Adrenal gland (tissue), 19 donors: ENCODE measurements at regions of chr14 and their contacts with region 1.

Region 1: GRCh38 chr14:22986508-22987054 is 4.2 kb upstream of the AJUBA start:
- DNase-seq: peak; percentile 84 to 98 (median 93)
- H3K4me3 ChIP-seq: no peak overlapping the region
- H3K27ac ChIP-seq: no peak overlapping the region
- H3K4me1 ChIP-seq: peaks cover 6 to 15% of the 10 kb centered on the region in 2 donors
- H3K27me3 ChIP-seq: no peaks in the 10 kb centered on the region
- CTCF ChIP-seq: peak; percentile 84 to 96 (median 93)
- POLR2A ChIP-seq: no peak

Region 2: DNA sequence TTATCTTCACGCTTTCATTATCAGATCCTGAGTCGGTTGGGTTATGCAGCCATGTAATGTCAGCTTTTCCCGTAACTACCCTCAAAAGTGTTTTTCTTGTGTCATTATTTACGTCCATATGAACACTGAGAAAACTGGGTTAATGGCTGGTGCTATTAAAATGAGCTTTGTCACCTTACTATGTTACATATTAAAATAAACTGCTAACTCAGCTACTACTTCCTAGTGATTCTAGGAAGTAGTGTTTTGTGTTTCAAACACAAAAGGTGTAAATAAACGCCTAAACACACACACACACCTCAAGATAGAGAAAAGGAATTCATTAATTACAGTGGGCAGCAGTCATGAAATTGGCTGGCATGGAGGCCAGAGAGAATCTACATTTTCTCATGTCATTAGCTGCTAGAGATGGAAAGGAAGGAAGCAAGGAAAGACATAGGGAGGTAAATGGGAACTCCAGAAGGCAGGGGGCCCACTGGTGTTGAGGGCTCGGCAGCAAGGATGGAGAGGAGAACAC is 56.7 kb before region 1 on chr14:
- intact Hi-C with region 1: loop called in 1 of 2 experiments (anchors 10 kb)
- DNase-seq: no peak
- H3K4me3 ChIP-seq: peak overlapping the region in 3 of 4 donors; percentile 11 to 54 (median 46)
- H3K27ac ChIP-seq: peak overlapping the region; percentile 76 to 92 (median 82)
- H3K4me1 ChIP-seq: peaks cover 0 to 17% of the 10 kb centered on the region in 2 donors
- H3K27me3 ChIP-seq: no peaks in the 10 kb centered on the region
- CTCF ChIP-seq: no peak
- POLR2A ChIP-seq: no peak

Region 3: GRCh38 chr14:23057757-23058653 is 71.4 kb after region 1 on chr14:
- intact Hi-C with region 1: loop called (anchors 5 kb)
- DNase-seq: peak; percentile 81 to 94 (median 90)
- H3K4me3 ChIP-seq: peak overlapping the region in 2 of 4 donors; percentile 54 to 90
- H3K27ac ChIP-seq: peak overlapping the region in 3 of 5 donors; percentile 57 to 77 (median 73)
- H3K4me1 ChIP-seq: peaks cover 12 to 26% of the 10 kb centered on the region in 2 donors
- H3K27me3 ChIP-seq: no peaks in the 10 kb centered on the region
- CTCF ChIP-seq: peak; percentile 93 to 97 (median 96)
- POLR2A ChIP-seq: no peak

Region 4: GRCh38 chr14:23478111-23478759 is 491.7 kb after region 1 on chr14:
- intact Hi-C with region 1: no loop called
- DNase-seq: peak; percentile 60 to 87 (median 69)
- H3K4me3 ChIP-seq: no peak overlapping the region
- H3K27ac ChIP-seq: no peak overlapping the region
- H3K4me1 ChIP-seq: no peaks in the 10 kb centered on the region
- H3K27me3 ChIP-seq: no peaks in the 10 kb centered on the region
- CTCF ChIP-seq: peak; percentile 62 to 88 (median 82)
- POLR2A ChIP-seq: no peak